CD14-positive monocyte (primary cell): ENCODE measurements at regions of chrX and their contacts with region 1.

Region 1: GRCh38 chrX:1453951-1454785 is 1.5 kb upstream of the ASMTL start:
- DNase-seq: peak; percentile 76 to 84 (median 78)
- H3K4me3 ChIP-seq: peak overlapping the region; percentile 45 to 81 (median 76)
- H3K4me3 Mint-ChIP-seq: peak overlapping the region; percentile 51 to 57
- H3K27ac ChIP-seq: peak overlapping the region; percentile 69 to 95
- H3K27ac Mint-ChIP-seq: peak overlapping the region in 5 of 7 donors; percentile 57 to 81 (median 65)
- H3K4me1 ChIP-seq: peaks cover 13 to 16% of the 10 kb centered on the region in 2 donors
- H3K4me1 Mint-ChIP-seq: peaks cover 3% of the 10 kb centered on the region
- H3K27me3 ChIP-seq: no peaks in the 10 kb centered on the region
- H3K27me3 Mint-ChIP-seq: peaks cover 3 to 9% (median 3%) of the 10 kb centered on the region in 3 donors
- CTCF ChIP-seq: peak; percentile 99

Region 2: DNA sequence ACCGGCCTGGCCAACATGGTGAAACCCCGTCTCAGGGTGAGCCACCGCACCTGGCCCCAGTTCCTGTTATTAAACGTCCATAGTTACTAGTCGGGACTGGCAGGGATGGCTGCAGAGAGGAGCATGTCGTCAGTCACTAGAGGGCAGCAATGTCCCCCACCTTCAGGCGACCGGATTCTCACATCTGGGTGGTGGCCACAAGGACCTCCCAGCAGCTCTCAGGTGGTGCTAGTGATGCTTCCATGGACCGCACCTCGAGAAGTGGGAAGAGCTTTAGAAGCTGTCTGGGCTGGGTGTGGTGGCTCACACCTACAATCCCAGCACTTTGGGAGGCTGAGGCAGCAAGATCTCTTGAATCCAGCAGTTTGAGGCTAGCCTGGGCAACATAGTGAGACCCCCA is 130.9 kb before region 1 on chrX:
- intact Hi-C with region 1: loop called in 1 of 2 experiments (anchors 10 kb)
- DNase-seq: peak; percentile 74 to 86 (median 84)
- H3K4me3 ChIP-seq: no peak overlapping the region
- H3K4me3 Mint-ChIP-seq: no peak overlapping the region
- H3K27ac ChIP-seq: no peak overlapping the region
- H3K27ac Mint-ChIP-seq: peak overlapping the region in 6 of 7 donors; percentile 57 to 89 (median 84)
- H3K4me1 ChIP-seq: peaks cover 54% of the 10 kb centered on the region in 2 donors
- H3K4me1 Mint-ChIP-seq: peaks cover 52% of the 10 kb centered on the region
- H3K27me3 ChIP-seq: no peaks in the 10 kb centered on the region
- H3K27me3 Mint-ChIP-seq: peaks cover 0 to 10% (median 0%) of the 10 kb centered on the region in 3 donors
- CTCF ChIP-seq: peak; percentile 68

Region 3: GRCh38 chrX:1491851-1492349 is 37.7 kb after region 1 on chrX:
- intact Hi-C with region 1: no loop called
- DNase-seq: no peak
- H3K4me3 ChIP-seq: no peak overlapping the region
- H3K4me3 Mint-ChIP-seq: no peak overlapping the region
- H3K27ac ChIP-seq: no peak overlapping the region
- H3K27ac Mint-ChIP-seq: peak overlapping the region in 4 of 7 donors; percentile 42 to 87 (median 68)
- H3K4me1 ChIP-seq: peaks cover 15 to 25% of the 10 kb centered on the region in 2 donors
- H3K4me1 Mint-ChIP-seq: peaks cover 35% of the 10 kb centered on the region
- H3K27me3 ChIP-seq: no peaks in the 10 kb centered on the region
- H3K27me3 Mint-ChIP-seq: peaks cover 0 to 2% (median 2%) of the 10 kb centered on the region in 3 donors
- CTCF ChIP-seq: no peak

Region 4: DNA sequence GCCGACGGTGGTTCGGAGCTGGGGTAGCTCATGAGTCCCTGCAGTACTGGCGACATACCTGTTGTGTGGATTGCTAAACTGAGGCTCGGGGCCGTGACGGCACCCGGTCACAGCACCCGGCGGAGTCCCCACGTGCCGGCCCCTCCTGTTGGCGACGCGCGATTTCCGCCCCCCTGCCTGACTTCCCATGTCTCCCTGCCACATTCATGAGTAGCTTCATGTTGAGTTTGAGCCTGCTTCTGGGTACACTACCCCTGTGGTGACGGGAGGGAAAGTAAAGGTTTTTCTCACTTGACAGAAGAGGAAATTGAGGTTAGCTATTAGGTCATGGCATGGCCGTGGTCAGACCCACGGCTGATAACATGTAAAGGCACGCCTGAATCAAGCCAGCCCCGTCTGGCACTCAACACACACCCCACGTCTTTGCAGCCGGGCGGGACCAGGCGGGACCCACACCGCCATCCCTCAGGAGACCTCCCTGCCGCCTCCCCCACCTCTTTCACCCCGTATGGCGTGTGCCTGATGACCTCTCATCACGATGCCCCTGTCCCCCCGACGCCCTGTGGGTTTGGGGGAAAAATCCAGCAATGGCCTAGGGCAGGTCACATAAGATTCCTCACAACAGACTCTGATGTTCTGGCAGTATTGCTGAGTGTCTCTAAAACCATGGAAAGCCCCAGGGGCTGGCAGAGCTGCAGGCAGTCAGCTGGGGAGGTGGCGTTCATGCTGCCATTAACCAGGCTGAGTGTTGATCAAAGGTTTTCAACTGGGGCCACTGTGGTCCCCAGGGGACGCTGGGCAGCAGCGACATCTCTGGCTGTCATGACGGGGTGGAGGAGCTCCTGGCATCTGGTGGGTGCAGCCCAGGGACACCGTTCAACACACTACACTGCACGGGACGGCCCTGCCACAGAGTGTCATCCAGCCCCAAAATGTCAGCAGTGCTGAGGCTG is 53.6 kb after region 1 on chrX:
- intact Hi-C with region 1: loop called in 1 of 2 experiments (anchors 5 kb)
- DNase-seq: peak; percentile 82 to 86 (median 83)
- H3K4me3 ChIP-seq: peak overlapping the region in 1 of 3 experiments; percentile 36
- H3K4me3 Mint-ChIP-seq: peak overlapping the region; percentile 40 to 47
- H3K27ac ChIP-seq: peak overlapping the region; percentile 21 to 80
- H3K27ac Mint-ChIP-seq: peak overlapping the region in 4 of 7 donors; percentile 83 to 97 (median 84)
- H3K4me1 ChIP-seq: peaks cover 55% of the 10 kb centered on the region in 2 donors
- H3K4me1 Mint-ChIP-seq: peaks cover 19% of the 10 kb centered on the region
- H3K27me3 ChIP-seq: no peaks in the 10 kb centered on the region
- H3K27me3 Mint-ChIP-seq: peaks cover 0 to 2% (median 0%) of the 10 kb centered on the region in 3 donors
- CTCF ChIP-seq: no peak

Region 5: GRCh38 chrX:1580735-1581531 is 126.8 kb after region 1 on chrX:
- intact Hi-C with region 1: loop called in 1 of 2 experiments (anchors 1 kb)
- DNase-seq: peak; percentile 71 to 77 (median 75)
- H3K4me3 ChIP-seq: no peak overlapping the region
- H3K4me3 Mint-ChIP-seq: no peak overlapping the region
- H3K27ac ChIP-seq: no peak overlapping the region
- H3K27ac Mint-ChIP-seq: no peak overlapping the region
- H3K4me1 ChIP-seq: no peaks in the 10 kb centered on the region
- H3K4me1 Mint-ChIP-seq: peaks cover 9% of the 10 kb centered on the region
- H3K27me3 ChIP-seq: no peaks in the 10 kb centered on the region
- H3K27me3 Mint-ChIP-seq: peaks cover 0 to 2% (median 0%) of the 10 kb centered on the region in 3 donors
- CTCF ChIP-seq: peak; percentile 98

Region 6: GRCh38 chrX:2311501-2311900 is 857.3 kb after region 1 on chrX:
- intact Hi-C with region 1: no loop called
- DNase-seq: no peak
- H3K4me3 ChIP-seq: no peak overlapping the region
- H3K4me3 Mint-ChIP-seq: no peak overlapping the region
- H3K27ac ChIP-seq: no peak overlapping the region
- H3K27ac Mint-ChIP-seq: no peak overlapping the region
- H3K4me1 ChIP-seq: no peaks in the 10 kb centered on the region
- H3K4me1 Mint-ChIP-seq: no peaks in the 10 kb centered on the region
- H3K27me3 ChIP-seq: no peaks in the 10 kb centered on the region
- H3K27me3 Mint-ChIP-seq: peaks cover 0 to 3% (median 0%) of the 10 kb centered on the region in 3 donors
- CTCF ChIP-seq: no peak

Region 7: GRCh38 chrX:2577844-2578506 is 1123.8 kb after region 1 on chrX:
- intact Hi-C with region 1: no loop called
- DNase-seq: no peak
- H3K4me3 ChIP-seq: no peak overlapping the region
- H3K4me3 Mint-ChIP-seq: no peak overlapping the region
- H3K27ac ChIP-seq: no peak overlapping the region
- H3K27ac Mint-ChIP-seq: no peak overlapping the region
- H3K4me1 ChIP-seq: no peaks in the 10 kb centered on the region
- H3K4me1 Mint-ChIP-seq: no peaks in the 10 kb centered on the region
- H3K27me3 ChIP-seq: peaks cover 16 to 23% of the 10 kb centered on the region in 2 donors
- H3K27me3 Mint-ChIP-seq: peaks cover 28 to 34% (median 28%) of the 10 kb centered on the region in 3 donors
- CTCF ChIP-seq: no peak

Region 8: GRCh38 chrX:2595258-2595657 is 1141.1 kb after region 1 on chrX:
- intact Hi-C with region 1: loop called (anchors 10 kb)
- DNase-seq: no peak
- H3K4me3 ChIP-seq: no peak overlapping the region
- H3K4me3 Mint-ChIP-seq: no peak overlapping the region
- H3K27ac ChIP-seq: no peak overlapping the region
- H3K27ac Mint-ChIP-seq: no peak overlapping the region
- H3K4me1 ChIP-seq: no peaks in the 10 kb centered on the region
- H3K4me1 Mint-ChIP-seq: no peaks in the 10 kb centered on the region
- H3K27me3 ChIP-seq: no peaks in the 10 kb centered on the region
- H3K27me3 Mint-ChIP-seq: peaks cover 0 to 8% (median 2%) of the 10 kb centered on the region in 3 donors
- CTCF ChIP-seq: no peak